GM18951 (cell line): ENCODE measurements at regions of chr22 and their contacts with region 1.

Region 1: DNA sequence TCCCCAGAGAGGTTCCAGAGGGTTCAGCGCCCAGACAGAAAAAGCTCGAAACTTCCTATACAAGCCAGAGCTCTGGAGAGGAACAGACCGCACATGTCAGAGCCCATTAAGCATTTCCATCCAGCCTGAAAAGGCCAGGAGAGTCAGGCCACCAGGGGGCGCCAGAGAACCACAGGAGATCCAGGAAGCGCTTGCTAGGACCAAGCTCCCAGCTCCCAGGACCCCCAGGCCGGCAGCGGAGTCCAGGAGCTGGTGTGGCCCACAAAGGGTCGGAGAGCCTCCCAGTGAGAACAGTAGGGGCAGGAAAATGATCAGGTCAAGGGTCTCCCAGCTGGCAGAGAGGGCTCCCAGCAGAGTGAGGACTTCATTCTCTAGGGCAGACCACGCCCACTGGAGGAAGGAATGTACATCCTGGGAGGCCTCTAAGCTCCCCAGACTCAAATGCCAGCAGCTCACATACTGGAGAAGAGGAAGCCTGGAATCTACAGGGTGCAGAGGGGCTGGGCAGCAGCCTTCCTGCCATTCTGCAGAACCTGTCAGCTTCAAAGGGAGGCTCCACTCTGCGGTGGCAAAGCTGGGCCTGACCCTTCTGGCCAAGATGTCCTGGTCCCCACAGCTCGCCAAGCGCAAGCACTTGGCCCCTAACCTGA is 2.1 kb upstream of the MEI1 start:
- POLR2A ChIP-seq: no peak

Region 2: GRCh38 chr22:41458161-41458728 is 239.0 kb before region 1 on chr22:
- in situ Hi-C with region 1: no loop called
- POLR2A ChIP-seq: no peak

Region 3: DNA sequence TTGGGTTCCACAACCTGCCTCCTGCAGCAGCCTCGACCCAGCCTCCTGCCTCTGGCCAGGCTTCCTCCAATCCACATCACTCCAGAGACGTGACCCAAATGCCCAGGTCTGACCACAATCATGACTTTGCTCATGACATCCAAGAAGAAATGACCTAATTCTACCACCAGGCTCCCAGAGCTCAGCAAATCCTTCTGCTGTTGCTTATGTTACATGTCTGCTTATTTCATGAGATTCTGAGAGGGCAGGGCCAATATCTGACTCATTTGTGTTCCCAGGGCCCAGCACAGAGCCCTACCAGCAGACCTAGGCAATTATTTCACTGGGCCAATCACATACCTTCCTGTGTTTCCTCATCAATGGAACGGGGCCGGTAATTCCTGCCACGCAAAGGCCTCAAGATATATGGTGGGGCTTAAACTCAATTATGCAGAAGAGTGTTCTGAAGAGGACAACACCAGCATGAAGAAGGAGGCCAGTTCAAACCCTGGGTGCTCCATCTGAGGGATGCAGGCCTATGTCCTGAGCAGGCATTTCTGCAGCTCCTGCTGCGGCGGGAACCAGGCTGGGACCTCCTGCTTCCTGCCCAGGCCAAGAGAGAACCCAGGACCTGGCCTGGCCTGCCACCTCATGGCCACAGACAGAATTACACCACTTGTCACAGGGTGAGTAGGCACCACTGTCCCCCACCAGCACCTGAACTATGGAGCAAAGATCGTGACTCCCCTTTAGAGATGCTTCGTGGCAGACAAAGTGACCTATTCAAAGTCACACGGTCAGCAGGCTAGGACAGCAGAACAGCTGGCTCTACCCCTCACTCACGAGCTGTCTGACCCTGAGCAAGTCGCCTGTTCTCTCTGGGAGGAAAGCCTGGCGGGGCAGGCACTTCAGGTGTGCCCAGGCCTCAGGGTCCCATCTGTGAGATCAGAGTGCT is 243.8 kb after region 1 on chr22:
- in situ Hi-C with region 1: loop called (anchors 5 kb)
- POLR2A ChIP-seq: peak; percentile 20

Region 4: GRCh38 chr22:42079319-42080251 is 382.3 kb after region 1 on chr22 and contains the start of gene SMDT1:
- in situ Hi-C with region 1: no loop called
- POLR2A ChIP-seq: peak; percentile 87